Activated T-helper 2 cell treated with anti-CD3 and anti-CD28 coated beads, Interferon-gamma antibody, Interleukin-2, Interleukin-4, amounts not matched to agents 10 μg/mL and 5 μg/mL and 100 μg/mL, durations not matched to agents 14 hours and 24 hours and 36 hours (primary cell): ENCODE measurements at regions of chr6 and their contacts with region 1.

Region 1: DNA sequence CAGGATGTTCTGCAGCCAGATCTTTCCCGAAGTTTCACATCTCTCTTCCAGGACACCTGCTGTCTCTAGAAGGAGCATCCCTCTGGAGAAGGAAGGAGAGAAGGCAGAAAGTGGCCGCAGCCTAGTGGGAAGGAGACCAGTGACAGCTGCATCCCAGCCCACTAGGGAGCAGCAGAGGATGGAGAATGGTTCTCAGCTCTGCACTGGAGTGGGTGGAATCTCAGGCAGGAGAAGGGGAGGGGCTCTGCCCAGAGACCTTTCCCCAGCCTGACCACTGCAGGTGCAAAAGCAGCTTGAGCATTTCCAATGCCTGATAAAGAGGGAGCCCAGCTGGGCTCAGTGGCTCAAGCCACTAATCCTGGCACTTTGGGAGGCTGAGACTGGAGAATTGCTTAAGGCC is 32.3 kb downstream of the NCR2 start:
- DNase-seq: no peak
- H3K4me3 Mint-ChIP-seq: no peak overlapping the region
- H3K27ac Mint-ChIP-seq: no peak overlapping the region
- H3K4me1 Mint-ChIP-seq: peaks cover 9% of the 10 kb centered on the region
- H3K27me3 Mint-ChIP-seq: peaks cover 50% of the 10 kb centered on the region

Region 2: GRCh38 chr6:40807484-40807883 is 560.2 kb before region 1 on chr6:
- intact Hi-C with region 1: no loop called
- DNase-seq: no peak
- H3K4me3 Mint-ChIP-seq: no peak overlapping the region
- H3K27ac Mint-ChIP-seq: no peak overlapping the region
- H3K4me1 Mint-ChIP-seq: no peaks in the 10 kb centered on the region
- H3K27me3 Mint-ChIP-seq: no peaks in the 10 kb centered on the region

Region 3: DNA sequence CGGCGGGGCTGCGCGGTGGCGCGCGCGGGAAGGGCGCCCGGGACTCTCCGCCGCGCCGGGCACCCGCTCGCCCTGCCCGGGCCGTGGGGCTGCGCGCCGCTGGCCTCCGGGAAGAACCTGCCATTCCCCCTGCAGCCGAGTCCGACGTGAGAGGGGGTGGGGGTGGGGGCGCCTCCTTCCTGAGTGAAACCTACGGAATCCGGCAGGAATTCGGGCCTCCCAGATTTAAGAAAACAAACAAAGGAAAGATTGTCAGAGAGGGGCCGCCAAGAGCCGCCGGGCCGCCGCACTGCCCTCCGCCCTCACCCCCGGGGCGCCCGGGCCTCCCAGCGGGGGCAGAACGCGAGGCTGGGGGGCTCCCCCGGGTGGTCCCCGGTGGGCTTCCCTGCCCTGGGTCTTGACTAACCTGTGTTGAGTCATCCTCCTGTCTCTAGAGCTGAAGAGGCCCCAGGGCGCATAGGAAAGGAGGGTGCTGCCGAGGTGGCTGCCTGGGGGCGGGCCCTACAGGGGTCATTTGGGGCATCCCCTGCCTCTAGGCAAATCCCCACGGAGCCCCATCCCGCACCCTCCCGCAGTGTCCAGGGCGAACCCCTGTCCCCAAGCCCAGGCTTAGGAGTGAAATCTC is 136.3 kb after region 1 on chr6:
- intact Hi-C with region 1: loop called (anchors 5 kb)
- DNase-seq: no peak
- H3K4me3 Mint-ChIP-seq: no peak overlapping the region
- H3K27ac Mint-ChIP-seq: no peak overlapping the region
- H3K4me1 Mint-ChIP-seq: peaks cover 2% of the 10 kb centered on the region
- H3K27me3 Mint-ChIP-seq: peaks cover 62% of the 10 kb centered on the region

Region 4: DNA sequence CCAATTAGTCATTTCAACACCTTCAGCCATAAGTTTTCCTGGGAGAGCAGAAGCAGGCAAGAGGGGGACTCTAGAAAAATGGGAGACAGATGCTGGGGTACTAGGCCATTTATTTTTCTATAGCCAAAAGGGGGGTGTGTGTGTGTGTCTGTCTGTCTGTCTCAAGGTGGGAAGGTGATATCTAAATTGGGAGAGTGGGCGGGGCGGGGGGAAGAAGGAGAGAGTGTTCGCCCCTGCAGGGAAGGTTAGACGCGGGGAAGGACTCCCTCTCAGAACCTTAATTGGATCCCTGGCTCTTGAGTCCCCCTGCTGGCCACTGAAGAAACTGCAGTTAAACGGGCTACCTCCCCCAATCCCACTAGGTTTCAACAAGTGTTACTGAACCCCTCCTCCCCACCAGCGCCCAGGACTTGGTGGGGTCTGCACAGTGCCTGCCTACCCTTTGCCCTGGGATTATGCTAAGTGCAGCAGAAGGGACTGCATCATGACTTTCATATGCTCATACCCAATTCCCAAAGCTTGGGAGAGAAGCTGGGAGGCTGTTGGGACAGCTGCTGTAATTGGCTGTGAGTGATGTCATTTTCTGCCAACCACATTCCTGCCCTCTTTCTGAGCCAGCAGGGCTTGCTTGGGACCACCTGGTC is 224.3 kb after region 1 on chr6:
- intact Hi-C with region 1: loop called (anchors 1 kb)
- DNase-seq: peak; percentile 65
- H3K4me3 Mint-ChIP-seq: no peak overlapping the region
- H3K27ac Mint-ChIP-seq: no peak overlapping the region
- H3K4me1 Mint-ChIP-seq: peaks cover 1% of the 10 kb centered on the region
- H3K27me3 Mint-ChIP-seq: no peaks in the 10 kb centered on the region

Region 5: DNA sequence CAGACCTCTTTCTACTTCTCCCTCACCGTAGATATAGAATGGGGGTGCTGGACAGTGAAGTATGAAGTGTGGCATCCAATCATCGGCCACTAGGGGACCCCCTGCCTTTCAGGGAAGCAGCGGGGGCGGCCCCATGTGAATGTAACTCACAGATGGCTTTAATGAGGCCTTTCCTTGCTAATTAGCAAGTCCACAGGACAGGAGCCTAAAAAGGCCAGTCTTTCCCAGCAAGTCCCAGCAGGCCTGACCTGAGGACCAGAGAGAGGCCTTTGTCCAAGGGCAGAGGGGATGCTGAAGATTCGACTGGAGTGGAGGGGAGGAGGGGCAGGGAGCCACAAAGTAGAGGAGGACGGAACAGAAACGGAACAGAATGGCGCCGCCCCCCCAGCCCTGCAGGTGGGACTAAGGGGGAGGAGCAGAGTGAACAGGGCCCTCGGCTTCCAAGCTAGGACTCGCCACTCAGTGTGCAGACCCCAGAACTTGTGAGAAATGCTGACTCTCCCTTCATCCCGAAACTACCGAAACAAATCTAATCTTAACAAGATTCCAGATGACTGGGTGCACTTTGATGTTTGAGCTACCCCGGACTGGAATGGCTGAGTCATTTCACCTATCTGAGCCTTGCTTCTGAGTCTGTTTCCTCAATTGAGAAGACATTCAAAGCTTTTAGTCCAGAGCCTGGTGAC is 769.0 kb after region 1 on chr6:
- intact Hi-C with region 1: no loop called
- DNase-seq: no peak
- H3K4me3 Mint-ChIP-seq: no peak overlapping the region
- H3K27ac Mint-ChIP-seq: no peak overlapping the region
- H3K4me1 Mint-ChIP-seq: peaks cover 6% of the 10 kb centered on the region
- H3K27me3 Mint-ChIP-seq: peaks cover 20% of the 10 kb centered on the region